Lower leg skin (tissue), 4 donors: ENCODE measurements at regions of chr9 and their contacts with region 1.

Region 1: GRCh38 chr9:126599047-126599650 is 14.6 kb upstream of the LMX1B start:
- DNase-seq: no peak
- H3K4me3 ChIP-seq: no peak overlapping the region
- CTCF ChIP-seq: no peak
- POLR2A ChIP-seq: no peak

Region 2: GRCh38 chr9:125932017-125932416 is 667.1 kb before region 1 on chr9:
- intact Hi-C with region 1: no loop called
- DNase-seq: peak in 1 of 2 donors; percentile 42
- H3K4me3 ChIP-seq: no peak overlapping the region
- CTCF ChIP-seq: no peak
- POLR2A ChIP-seq: no peak

Region 3: DNA sequence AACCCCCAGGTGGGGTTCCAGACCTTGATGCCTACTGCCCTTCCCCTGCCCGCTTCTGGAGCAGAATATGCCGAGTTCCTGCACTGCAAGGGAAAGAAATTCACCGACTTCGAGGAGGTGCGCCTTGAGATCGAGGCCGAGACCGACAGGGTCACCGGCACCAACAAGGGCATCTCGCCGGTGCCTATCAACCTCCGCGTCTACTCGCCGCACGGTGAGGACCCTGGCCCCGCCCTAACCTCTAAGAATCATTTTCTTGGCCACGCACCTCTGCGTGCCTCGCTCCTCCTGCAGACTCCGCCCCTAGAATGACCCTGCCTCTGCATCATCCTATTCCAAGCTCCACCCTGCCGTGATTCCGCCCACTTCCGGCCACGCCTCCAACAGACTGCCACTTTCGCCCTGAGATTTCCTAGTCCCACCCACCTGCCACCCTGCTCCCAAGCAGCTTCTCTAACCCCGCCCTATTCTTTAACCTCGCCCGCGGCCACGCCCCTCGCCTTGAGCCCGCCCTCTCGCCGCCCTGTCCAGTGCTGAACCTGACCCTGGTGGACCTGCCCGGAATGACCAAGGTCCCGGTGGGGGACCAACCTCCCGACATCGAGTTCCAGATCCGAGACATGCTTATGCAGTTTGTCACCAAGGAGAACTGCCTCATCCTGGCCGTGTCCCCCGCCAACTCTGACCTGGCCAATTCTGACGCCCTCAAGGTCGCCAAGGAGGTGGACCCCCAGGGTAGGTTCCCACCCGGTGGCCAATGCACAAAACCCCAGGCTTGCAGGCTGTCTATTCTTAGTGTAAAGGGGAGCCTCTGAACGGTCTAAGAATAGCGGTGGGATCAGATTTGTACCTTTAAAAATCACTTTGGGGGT is 1619.6 kb after region 1 on chr9:
- intact Hi-C with region 1: loop called (anchors 5 kb)
- DNase-seq: peak; percentile 96 to 98
- H3K4me3 ChIP-seq: no peak overlapping the region
- CTCF ChIP-seq: no peak
- POLR2A ChIP-seq: no peak